Naive thymus-derived CD8-positive, alpha-beta T cell (primary cell): ENCODE measurements at regions of chr1 and their contacts with region 1.

Region 1: GRCh38 chr1:200669314-200670241 is at the start of gene DDX59:
- DNase-seq: peak; percentile 78 to 91 (median 86)
- ATAC-seq: peak; percentile 86 to 88
- H3K4me3 Mint-ChIP-seq: peak within 1 kb of the TSS; percentile 89 to 100 (median 96)
- H3K27ac Mint-ChIP-seq: peak within 1 kb of the TSS; percentile 91 to 98 (median 96)
- H3K4me1 Mint-ChIP-seq: peaks cover 18 to 57% (median 45%) of the 10 kb centered on the region in 4 donors
- H3K27me3 Mint-ChIP-seq: no peaks in the 10 kb centered on the region
- polyA plus RNA-seq, gene DDX59: 10.0 to 20.9 (median 12.0) TPM

Region 2: GRCh38 chr1:200620273-200621131 is 49.1 kb before region 1 on chr1 and contains the start of gene KIF14:
- POLR2A ChIA-PET with region 1: interaction called, 13 read pairs
- DNase-seq: peak; percentile 87 to 96 (median 91)
- ATAC-seq: peak; percentile 95 to 96
- H3K4me3 Mint-ChIP-seq: peak within 1 kb of the TSS; percentile 92 to 99 (median 96)
- H3K27ac Mint-ChIP-seq: peak within 1 kb of the TSS; percentile 76 to 97 (median 93)
- H3K4me1 Mint-ChIP-seq: peaks cover 4 to 28% (median 21%) of the 10 kb centered on the region in 4 donors
- H3K27me3 Mint-ChIP-seq: no peaks in the 10 kb centered on the region
- polyA plus RNA-seq, gene KIF14: not detected

Region 3: GRCh38 chr1:200646515-200646914 is 23.1 kb before region 1 on chr1:
- POLR2A ChIA-PET with region 1: no interaction called
- DNase-seq: no peak
- ATAC-seq: no peak
- H3K4me3 Mint-ChIP-seq: no peak overlapping the region
- H3K27ac Mint-ChIP-seq: no peak overlapping the region
- H3K4me1 Mint-ChIP-seq: peaks cover 0 to 5% (median 0%) of the 10 kb centered on the region in 4 donors
- H3K27me3 Mint-ChIP-seq: no peaks in the 10 kb centered on the region